ENCODE measurements at regions of chr16 and their contacts with region 1.

Region 1: GRCh38 chr16:14285513-14286385 is 214.6 kb downstream of the MRTFB start:
- DNase-seq: peak; percentile 97
- H3K4me3 ChIP-seq: peak overlapping the region; percentile 79
- H3K27ac ChIP-seq: peak overlapping the region; percentile 67
- H3K4me1 ChIP-seq: peaks cover 1% of the 10 kb centered on the region
- H3K27me3 ChIP-seq: no peaks in the 10 kb centered on the region
- CTCF ChIP-seq: no peak

Region 2: DNA sequence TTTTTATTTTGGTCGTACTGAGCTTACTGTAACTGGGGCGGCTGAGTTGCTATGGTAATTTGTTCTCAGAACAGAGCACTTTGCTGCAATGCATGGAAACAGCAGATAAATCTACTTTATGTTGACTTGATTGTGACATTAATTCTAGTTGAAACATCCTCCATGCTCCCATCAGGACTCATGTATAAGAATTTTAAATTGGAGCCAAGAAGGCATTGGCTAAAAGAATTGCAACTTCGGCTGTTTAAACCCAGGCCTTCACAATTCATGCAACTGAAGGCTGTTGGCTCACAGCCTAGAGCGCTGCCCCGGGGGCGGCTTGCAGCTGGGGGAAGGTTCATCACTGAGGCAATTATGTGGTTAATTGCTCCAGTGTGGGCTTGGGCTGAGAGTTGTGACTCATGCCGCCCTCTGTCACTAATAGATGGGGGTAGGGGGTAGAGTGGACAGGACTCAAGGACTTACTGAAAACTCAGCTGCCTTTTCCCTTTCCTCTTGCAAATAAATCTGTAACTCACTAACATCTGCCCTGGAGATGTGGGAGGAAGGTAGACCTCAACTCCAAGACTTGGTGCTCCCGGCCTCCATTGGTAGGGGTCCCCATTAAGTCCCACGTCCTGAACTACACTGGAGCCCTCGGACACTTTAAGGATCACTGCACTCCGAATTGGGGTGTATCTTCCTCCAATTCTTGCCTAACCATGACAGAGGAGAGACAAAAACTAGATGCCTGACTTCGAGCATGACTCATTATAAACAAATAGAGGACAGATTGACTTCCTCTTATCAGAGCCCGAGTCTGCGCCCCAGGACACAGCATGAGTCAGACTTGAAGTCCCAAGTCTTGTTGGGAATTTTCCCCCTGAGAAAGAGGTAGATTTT is 328.3 kb before region 1 on chr16:
- CTCF ChIA-PET with region 1: no interaction called
- POLR2A ChIA-PET with region 1: no interaction called
- intact Hi-C with region 1: loop called (anchors 5 kb)
- DNase-seq: peak; percentile 87
- H3K4me3 ChIP-seq: peak overlapping the region; percentile 15
- H3K27ac ChIP-seq: peak overlapping the region; percentile 51
- H3K4me1 ChIP-seq: peaks cover 21% of the 10 kb centered on the region
- H3K27me3 ChIP-seq: no peaks in the 10 kb centered on the region
- CTCF ChIP-seq: no peak